Activated naive CD4-positive, alpha-beta T cell treated with anti-CD3 and anti-CD28 coated beads for 36 hours (primary cell): ENCODE measurements at regions of chr17 and their contacts with region 1.

Region 1: DNA sequence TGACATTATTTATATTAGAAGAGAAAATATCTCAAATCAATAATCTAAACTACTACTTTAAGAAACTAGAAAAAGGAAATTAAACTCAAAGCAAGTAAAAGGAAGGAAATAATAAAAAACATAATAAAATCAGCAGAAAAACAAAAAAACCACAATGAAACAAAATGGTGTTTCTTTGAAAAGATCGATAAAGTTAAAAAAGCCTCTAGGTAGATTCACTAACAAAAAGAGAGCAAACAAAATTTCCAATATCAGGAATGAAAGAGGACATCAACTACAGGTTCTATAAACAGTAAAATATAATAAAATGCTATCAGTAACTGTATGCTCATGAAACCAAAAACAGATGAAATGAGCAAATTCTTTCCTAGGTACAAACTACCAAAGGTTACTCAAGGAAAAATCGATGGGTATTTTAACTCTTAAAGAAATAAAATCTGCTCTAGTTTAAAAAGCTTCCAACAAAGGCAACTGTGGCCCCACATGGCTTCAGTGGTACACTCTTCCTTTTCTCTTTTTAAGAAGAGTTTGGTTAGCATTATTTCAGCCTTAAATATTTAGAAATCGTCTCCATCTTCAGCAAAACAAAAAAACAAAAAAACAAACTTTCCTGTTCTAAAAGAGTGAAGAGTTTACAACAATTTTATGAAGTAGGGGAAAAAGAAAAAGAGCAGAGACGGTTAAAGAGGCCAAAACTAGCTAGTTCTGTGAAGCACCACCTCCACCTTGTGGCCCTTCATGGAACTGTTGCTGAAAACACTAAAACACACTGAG is 102.2 kb downstream of the TRIM37 start:
- DNase-seq: peak; percentile 86
- H3K4me3 Mint-ChIP-seq: no peak overlapping the region
- H3K27ac Mint-ChIP-seq: peak overlapping the region; percentile 61
- H3K4me1 Mint-ChIP-seq: peaks cover 28% of the 10 kb centered on the region
- H3K27me3 Mint-ChIP-seq: no peaks in the 10 kb centered on the region

Region 2: DNA sequence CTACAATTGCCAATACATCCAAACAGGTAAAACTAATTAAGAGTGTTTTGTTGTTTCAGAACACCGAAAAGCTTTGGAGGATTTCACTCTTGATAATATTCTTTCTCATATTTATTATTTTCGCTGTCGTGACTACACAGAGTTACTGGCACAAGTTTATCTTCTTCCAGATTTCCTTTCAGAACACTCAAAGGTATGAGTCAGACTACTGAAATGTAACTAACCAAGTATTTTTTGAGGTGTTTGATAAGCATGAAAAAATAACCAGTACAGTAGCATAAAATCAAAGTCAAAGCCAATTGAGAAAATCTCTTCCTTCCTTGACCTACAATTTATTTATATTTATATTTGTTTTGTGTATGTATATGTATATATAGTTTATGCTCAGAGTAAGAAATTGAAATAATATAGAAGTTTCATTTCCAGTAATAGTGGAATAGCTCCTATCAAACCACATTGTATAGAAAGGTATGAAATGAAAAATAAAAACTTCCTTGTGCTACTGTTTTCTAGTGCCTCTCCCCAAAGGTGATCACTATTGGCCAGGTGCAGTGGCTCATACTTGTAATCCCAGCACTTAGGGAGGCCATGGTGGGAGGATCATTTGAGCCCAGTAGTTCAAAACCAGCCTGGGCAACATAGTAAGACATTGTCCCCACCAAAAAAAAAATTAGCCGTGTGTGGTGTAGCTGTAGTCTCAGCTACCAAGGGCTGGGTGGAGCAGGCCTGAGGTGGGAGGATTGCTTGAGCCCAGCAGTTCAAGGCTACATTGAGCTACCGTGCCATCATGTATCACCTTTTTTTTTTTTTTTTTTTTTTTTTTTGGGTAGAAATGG is 301.2 kb before region 1 on chr17:
- CTCF ChIA-PET with region 1: no interaction called
- intact Hi-C with region 1: loop called (anchors 2 kb)
- DNase-seq: peak; percentile 26
- H3K4me3 Mint-ChIP-seq: no peak overlapping the region
- H3K27ac Mint-ChIP-seq: peak overlapping the region; percentile 71
- H3K4me1 Mint-ChIP-seq: peaks cover 30% of the 10 kb centered on the region
- H3K27me3 Mint-ChIP-seq: no peaks in the 10 kb centered on the region

Region 3: DNA sequence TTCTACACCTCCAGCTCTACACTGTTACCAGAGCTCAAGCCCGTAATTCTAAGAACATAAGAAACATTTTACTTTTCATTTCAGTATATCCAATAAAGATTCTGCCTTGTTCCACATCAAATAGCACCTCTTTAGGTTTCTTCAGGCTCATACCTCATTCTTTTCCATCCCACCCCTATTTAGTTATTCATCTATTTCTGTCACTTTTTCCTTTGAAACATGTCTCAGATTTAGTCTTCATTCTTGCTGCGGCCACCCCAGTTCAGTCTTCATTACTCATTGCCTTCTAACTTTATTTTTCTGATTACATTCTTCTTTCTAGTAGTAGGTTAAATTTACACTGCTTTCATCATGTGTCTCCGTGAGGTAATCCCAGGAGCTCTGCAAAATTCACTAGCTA is 215.4 kb before region 1 on chr17:
- CTCF ChIA-PET with region 1: interaction called, 10 read pairs
- intact Hi-C with region 1: no loop called
- DNase-seq: peak; percentile 30
- H3K4me3 Mint-ChIP-seq: no peak overlapping the region
- H3K27ac Mint-ChIP-seq: no peak overlapping the region
- H3K4me1 Mint-ChIP-seq: peaks cover 12% of the 10 kb centered on the region
- H3K27me3 Mint-ChIP-seq: no peaks in the 10 kb centered on the region

Region 4: GRCh38 chr17:58960068-58960467 is 44.5 kb before region 1 on chr17:
- CTCF ChIA-PET with region 1: interaction called, 5 read pairs
- intact Hi-C with region 1: loop called (anchors 1 kb)
- DNase-seq: peak; percentile 13
- H3K4me3 Mint-ChIP-seq: no peak overlapping the region
- H3K27ac Mint-ChIP-seq: no peak overlapping the region
- H3K4me1 Mint-ChIP-seq: no peaks in the 10 kb centered on the region
- H3K27me3 Mint-ChIP-seq: no peaks in the 10 kb centered on the region

Region 5: DNA sequence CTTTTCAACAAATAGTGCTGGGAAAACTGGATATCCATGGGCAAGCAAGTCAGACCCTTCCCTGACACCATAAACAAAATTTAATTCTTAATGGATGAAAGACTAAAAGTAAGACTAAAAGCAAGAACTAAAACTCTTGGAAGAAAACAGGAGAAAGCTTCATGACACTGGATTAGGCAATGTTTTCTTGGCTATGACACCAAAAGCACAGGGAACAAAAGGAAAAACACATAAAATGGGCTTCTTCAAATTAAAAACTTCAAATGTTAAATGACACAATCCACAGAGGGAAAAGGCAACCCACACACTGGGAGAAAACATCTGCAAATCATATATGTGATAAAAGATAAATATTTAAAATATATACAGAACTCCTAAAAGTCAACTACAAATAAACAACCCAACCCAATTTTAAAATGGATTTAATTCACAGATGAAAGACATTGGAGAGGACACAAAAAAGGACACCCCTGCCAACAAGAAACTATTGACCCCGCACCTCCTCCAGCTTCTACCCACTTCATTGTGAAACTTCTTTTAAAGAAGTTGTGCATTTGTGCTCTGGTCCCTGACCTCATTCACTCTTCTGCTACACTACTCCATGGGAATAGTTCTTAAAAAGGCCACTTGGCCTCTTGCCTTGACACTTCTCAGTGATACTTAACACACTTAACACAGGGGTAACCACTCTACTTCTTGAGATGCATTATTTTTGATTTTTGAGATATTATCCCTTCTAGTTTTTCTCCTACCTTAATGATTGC is 21.8 kb after region 1 on chr17:
- CTCF ChIA-PET with region 1: no interaction called
- intact Hi-C with region 1: no loop called
- DNase-seq: no peak
- H3K4me3 Mint-ChIP-seq: no peak overlapping the region
- H3K27ac Mint-ChIP-seq: no peak overlapping the region
- H3K4me1 Mint-ChIP-seq: peaks cover 5% of the 10 kb centered on the region
- H3K27me3 Mint-ChIP-seq: no peaks in the 10 kb centered on the region

Region 6: DNA sequence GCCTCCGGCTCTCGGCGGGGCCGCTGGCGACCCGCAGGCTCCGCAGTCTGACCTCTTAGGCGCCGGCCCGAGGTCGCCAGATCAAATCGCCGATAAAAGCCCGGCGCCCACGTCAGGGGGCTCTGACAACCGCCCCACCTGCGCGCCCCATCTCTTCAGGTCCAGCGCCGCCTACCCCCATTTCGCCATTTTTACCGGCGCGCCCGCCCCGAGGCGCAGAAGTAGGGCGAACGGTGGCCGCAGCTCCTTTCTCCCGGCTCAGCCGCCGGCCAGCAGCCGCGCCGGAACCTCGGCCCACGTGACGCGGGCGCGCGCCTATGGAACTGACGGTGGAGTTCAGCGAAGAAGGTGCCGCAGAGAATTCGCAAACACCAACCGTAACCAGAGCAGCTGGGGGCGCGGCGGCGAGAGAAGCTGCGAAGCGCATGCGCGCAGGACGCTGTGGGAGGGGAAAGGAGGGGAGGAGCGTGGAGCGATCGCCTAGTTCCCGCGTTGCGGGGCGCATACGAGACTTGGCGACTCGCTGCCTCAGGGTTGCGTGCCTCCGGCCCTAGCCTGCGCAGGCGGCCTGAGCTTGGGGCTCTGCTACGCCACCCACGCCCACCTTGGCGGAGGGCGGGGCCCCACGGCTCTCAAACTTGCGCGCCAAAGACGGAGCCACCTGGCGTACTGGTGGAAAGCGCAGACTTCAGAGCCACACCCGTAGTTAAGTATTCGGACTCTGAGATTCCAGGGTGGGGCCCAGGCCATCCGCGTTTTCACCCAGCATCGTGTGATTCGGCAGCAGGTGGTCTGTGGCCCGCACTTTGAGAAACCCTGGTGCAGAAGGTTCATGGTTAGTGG is 102.2 kb after region 1 on chr17 and contains the start of gene TRIM37:
- CTCF ChIA-PET with region 1: no interaction called
- intact Hi-C with region 1: loop called (anchors 1 kb)
- DNase-seq: peak; percentile 99
- H3K4me3 Mint-ChIP-seq: peak within 1 kb of the TSS; percentile 96
- H3K27ac Mint-ChIP-seq: peak within 1 kb of the TSS; percentile 89
- H3K4me1 Mint-ChIP-seq: peaks cover 54% of the 10 kb centered on the region
- H3K27me3 Mint-ChIP-seq: no peaks in the 10 kb centered on the region
- total RNA-seq, gene TRIM37: 19.9 to 24.1 TPM

Region 7: DNA sequence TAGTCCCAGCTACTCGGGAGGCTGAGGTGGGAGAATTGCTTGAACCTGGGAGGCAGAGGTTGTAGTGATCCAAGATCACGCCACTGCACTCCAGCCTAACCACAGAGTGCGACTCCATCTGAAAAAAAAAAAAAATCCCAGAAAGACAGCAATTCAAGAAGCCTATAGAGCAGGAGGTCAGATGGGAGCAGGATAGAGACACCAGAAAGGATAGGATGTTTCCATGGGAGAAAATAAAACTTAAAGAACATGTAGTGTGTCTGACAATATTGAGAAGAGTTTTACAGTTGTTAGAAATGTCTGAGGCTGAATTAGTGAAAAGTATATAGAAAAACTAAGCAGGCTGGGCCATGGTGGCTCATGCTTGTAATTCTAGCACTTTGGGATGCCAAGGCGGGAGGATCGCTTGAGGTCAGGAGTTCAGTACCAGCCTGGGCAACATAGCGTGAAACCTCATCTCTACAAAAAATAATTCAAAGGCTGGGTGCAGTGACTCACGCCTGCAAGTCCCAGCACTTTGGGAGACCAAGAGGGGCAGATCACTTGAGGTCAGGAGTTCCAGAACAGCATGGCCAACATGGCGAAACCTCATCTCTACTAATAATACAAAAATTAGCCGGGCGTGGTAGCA is 117.4 kb after region 1 on chr17:
- CTCF ChIA-PET with region 1: no interaction called
- intact Hi-C with region 1: no loop called
- DNase-seq: no peak
- H3K4me3 Mint-ChIP-seq: no peak overlapping the region
- H3K27ac Mint-ChIP-seq: no peak overlapping the region
- H3K4me1 Mint-ChIP-seq: peaks cover 2% of the 10 kb centered on the region
- H3K27me3 Mint-ChIP-seq: no peaks in the 10 kb centered on the region